Activated B cell treated with CpG ODN at 0.5 μM for 24 hours (primary cell): ENCODE measurements at regions of chr18 and their contacts with region 1.

Region 1: DNA sequence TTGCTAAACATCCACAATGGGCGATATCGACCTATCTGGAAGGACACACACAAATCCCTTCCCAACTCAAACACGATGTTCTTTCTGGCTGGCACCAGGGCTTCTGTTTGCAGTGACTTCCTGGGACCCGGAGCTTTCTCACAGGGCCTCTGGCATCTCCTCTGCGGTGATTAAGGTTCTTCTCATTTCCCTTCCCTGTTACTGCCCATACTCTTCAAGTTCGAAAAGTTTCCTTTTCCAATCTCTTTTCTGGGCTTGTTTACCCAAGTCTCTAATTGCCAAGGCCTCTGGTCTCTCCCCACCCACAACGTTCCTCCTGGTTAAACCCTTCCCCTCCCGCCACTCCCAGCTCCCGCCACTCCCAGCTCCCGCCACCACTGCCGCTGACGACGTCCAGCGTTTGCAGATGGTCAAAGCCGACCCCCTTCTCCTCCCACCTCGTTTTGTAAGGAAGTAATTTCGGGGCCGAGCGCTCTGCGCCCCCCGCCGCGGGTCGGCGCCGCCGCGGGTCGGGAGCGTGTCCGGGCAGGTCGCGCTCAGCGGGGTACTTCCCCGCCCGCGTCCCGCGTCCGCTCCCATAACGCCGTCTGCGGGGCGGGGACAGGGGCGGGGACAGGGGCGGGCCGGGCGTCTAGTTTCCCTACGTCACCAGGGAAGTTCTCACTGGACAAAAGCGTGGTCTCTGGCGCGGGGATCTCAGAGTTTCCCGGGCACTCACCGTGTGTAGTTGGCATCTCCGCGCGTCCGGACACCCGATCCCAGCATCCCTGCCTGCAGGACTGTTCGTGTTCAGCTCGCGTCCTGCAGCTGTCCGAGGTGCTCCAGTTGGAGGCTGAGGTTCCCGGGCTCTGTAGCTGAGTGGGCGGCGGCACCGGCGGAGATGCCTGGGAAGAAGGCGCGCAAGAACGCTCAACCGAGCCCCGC is at the start of gene PMAIP1:
- DNase-seq: peak; percentile 89
- ATAC-seq: peak; percentile 80
- H3K4me3 Mint-ChIP-seq: peak within 1 kb of the TSS; percentile 92
- H3K27ac Mint-ChIP-seq: peak within 1 kb of the TSS; percentile 99
- H3K4me1 Mint-ChIP-seq: peaks cover 40% of the 10 kb centered on the region
- H3K27me3 Mint-ChIP-seq: no peaks in the 10 kb centered on the region
- CTCF ChIP-seq: no peak
- total RNA-seq, gene PMAIP1: 68.5 and 69.9 TPM in 2 replicates

Region 2: DNA sequence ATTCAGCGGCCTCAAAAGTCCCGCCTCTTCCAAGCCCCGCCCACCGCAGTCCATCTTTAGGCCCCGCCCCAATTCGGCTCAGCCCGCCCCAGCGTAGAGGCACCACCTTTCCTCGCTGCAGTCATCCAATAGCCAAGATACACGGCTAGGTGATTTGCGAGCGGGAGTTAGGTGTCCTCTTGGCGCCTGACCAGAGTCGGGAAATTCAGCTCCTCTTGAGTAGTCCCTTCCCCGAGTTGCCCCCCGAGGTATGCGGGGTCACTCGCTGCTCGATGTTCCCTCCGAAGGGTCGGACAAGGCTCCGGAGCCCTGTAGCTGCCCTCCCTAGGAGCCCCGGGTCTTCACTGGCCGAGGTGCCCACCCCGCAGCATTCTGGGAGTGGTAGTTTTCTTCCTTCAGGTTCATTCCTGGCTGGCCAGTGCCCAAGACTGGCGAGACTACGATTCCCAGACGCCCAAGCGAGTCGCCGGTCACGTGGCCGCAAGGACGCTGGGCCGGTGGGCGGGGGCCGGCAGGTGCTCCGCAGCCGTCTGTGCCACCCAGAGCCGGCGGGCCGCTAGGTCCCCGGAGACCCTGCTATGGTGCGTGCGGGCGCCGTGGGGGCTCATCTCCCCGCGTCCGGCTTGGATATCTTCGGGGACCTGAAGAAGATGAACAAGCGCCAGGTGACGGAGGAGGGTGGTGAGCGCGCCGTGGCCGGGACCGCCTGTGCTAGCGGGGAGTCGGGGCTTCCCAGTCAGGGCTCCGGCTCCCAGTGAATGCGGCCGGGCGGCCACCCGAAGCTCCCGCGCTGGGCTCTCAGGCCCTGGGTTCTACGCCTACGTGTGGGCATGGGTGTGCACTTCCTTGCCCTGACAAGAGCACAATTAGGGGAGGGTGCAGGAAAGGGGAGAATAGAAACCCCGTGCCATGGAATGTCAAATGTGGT is 759.9 kb before region 1 on chr18 and contains the start of gene SEC11C:
- CTCF ChIA-PET with region 1: no interaction called
- POLR2A ChIA-PET with region 1: no interaction called
- intact Hi-C with region 1: loop called (anchors 1 kb)
- DNase-seq: peak; percentile 93
- ATAC-seq: peak; percentile 84
- H3K4me3 Mint-ChIP-seq: peak within 1 kb of the TSS; percentile 95
- H3K27ac Mint-ChIP-seq: peak within 1 kb of the TSS; percentile 100
- H3K4me1 Mint-ChIP-seq: peaks cover 44% of the 10 kb centered on the region
- H3K27me3 Mint-ChIP-seq: peaks cover 8% of the 10 kb centered on the region
- CTCF ChIP-seq: no peak
- total RNA-seq, gene SEC11C: 112 and 126 TPM in 2 replicates

Region 3: DNA sequence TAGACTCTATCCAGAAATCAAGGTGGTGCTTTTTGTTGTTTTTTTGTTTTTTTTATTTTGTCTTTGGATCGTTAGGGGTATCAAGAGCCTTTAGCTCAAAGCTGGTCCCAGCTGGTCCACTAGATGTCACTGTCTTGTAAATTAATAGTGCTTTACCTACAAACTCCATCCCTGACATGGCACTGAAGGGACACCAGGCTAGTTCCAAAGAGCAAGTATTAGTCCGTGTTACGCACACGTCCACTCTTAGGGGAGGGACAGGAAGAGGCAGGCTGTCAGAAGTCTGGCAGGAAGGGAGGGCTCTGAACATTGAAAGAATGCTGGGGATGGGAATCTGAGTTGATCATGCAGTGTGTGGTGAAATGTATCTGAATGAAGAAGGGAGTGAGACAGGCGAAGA is 116.4 kb before region 1 on chr18:
- CTCF ChIA-PET with region 1: no interaction called
- POLR2A ChIA-PET with region 1: no interaction called
- intact Hi-C with region 1: no loop called
- DNase-seq: no peak
- ATAC-seq: no peak
- H3K4me3 Mint-ChIP-seq: no peak overlapping the region
- H3K27ac Mint-ChIP-seq: no peak overlapping the region
- H3K4me1 Mint-ChIP-seq: no peaks in the 10 kb centered on the region
- H3K27me3 Mint-ChIP-seq: peaks cover 5% of the 10 kb centered on the region
- CTCF ChIP-seq: no peak

Region 4: DNA sequence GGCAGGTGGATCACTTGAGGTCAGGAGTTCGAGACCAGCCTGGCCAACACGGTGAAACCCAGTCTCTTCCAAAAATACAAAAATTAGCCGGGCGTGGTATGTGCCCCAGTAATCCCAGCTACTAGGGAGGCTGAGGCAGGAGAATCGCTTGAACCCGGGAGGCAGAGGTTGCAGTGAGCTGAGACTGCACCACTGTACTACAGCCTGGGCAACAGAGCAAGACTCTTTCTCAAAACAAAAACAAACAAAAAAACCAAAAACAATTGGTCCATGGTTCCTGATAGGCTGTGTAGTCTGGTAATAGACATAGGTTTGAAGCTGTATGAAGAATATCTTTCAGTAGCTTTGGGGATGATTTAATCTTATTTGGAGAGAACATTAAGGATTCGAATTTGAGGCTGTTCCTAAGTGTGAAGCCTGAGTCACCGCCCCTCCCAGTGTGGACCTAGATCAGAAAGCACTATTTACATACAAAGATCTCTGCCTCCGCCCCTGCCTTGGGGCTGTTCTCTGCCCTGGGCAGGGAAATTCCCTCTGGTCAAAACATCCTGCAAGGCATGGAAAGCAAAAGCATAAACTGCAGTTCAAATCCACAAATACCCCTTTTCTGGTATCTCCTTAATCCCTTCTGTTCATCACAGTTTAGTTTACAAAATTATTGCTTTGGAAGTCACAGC is 52.6 kb before region 1 on chr18:
- CTCF ChIA-PET with region 1: interaction called, 7 read pairs
- POLR2A ChIA-PET with region 1: interaction called, 61 read pairs
- intact Hi-C with region 1: loop called (anchors 1 kb)
- DNase-seq: no peak
- ATAC-seq: peak; percentile 89
- H3K4me3 Mint-ChIP-seq: peak overlapping the region; percentile 35
- H3K27ac Mint-ChIP-seq: peak overlapping the region; percentile 82
- H3K4me1 Mint-ChIP-seq: peaks cover 34% of the 10 kb centered on the region
- H3K27me3 Mint-ChIP-seq: no peaks in the 10 kb centered on the region
- CTCF ChIP-seq: no peak

Region 5: DNA sequence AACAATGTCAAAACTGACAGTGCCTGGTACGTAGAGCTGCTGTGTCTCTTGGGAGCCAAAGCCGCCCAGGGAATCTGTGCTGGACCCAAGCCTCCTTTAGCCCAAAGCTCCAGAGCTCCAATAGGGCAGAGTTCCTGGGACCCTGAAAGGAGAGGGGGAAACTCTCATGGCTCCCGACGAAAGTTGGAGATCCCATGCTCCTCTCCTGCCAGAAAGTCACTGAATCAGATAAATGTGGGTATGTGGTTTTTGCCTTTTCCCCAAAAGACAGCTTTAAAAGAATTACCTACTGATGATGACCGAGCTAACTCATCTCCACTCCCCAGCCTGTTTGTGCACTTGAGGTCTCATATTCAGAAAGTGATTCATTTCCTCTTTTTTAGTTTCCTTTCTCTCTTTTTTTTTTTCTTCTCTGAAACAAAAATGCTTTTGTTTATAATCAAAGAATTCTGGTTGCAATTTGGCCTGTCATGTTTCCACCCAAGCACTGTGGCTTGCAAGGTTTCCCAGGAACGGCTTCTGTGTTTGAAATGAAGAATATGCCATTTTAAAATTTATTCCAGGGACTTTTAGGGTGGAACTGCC is 13.9 kb before region 1 on chr18:
- CTCF ChIA-PET with region 1: interaction called, 4 read pairs
- POLR2A ChIA-PET with region 1: interaction called, 122 read pairs
- intact Hi-C with region 1: loop called (anchors 1 kb)
- DNase-seq: peak; percentile 38
- ATAC-seq: peak; percentile 79
- H3K4me3 Mint-ChIP-seq: peak overlapping the region; percentile 70
- H3K27ac Mint-ChIP-seq: peak overlapping the region; percentile 82
- H3K4me1 Mint-ChIP-seq: peaks cover 53% of the 10 kb centered on the region
- H3K27me3 Mint-ChIP-seq: no peaks in the 10 kb centered on the region
- CTCF ChIP-seq: no peak

Region 6: DNA sequence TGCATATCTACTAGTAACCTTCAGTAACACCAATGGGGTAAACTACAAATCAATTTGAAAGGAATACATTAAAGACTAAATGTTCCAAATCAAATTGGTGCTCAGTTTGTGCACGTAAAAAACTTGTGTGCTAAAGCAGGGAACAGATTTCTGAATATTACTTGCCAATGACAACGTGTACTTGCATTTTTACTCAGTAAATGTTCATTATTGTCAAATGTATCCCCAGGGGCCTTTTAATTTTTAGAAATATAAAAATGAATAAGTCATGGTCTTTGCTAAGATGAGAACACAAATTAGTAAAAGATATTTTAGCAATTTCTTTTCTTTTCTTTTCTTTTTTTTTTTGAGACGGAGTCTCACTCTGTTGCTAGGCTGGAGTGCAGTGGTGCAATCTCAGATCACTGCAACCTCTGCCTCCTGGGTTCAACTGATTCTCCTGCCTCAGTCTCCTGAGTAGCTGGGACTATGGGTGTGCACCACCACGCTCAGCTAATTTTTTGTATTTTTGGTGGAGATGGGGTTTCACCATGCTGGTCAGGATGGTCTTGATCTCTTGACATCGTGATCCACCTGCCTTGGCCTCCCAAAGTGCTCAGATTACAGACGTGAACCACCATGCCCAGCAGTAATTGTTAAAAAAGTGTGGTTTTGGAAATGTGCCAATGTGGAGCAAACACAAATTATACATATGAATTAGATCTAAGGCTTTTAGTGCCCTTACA is 52.9 kb after region 1 on chr18:
- CTCF ChIA-PET with region 1: interaction called, 6 read pairs
- POLR2A ChIA-PET with region 1: interaction called, 46 read pairs
- intact Hi-C with region 1: loop called (anchors 1 kb)
- DNase-seq: no peak
- ATAC-seq: no peak
- H3K4me3 Mint-ChIP-seq: no peak overlapping the region
- H3K27ac Mint-ChIP-seq: peak overlapping the region; percentile 50
- H3K4me1 Mint-ChIP-seq: peaks cover 26% of the 10 kb centered on the region
- H3K27me3 Mint-ChIP-seq: no peaks in the 10 kb centered on the region
- CTCF ChIP-seq: no peak

Region 7: DNA sequence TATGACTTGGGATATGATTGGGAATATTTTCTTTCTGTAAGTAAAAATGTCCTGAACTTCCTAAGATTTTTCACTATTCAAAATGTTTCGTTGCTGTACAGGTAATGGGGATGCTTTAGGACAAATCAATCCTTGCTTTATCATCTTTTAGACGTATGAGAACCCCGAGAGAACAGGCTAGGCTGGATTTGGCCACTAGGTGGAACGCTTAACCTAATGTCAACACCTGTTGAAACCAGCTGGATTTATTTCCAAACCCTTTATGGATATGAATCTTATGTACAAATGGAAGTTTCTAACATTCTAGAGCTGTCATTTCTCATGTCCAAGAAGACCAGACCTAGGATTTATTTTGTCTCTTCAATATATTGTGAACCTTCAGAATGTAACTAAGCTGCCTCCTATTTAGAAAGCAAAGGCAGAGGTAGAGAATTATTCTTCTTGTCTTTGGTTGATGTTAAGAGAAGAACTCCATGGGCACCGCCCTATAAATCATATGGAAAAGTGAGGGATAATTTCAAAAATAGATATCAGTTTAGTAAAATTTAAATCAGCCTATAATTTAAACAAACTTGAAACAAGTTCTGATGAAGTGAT is 96.9 kb after region 1 on chr18:
- CTCF ChIA-PET with region 1: interaction called, 3 read pairs
- POLR2A ChIA-PET with region 1: interaction called, 14 read pairs
- intact Hi-C with region 1: no loop called
- DNase-seq: no peak
- ATAC-seq: no peak
- H3K4me3 Mint-ChIP-seq: no peak overlapping the region
- H3K27ac Mint-ChIP-seq: no peak overlapping the region
- H3K4me1 Mint-ChIP-seq: no peaks in the 10 kb centered on the region
- H3K27me3 Mint-ChIP-seq: peaks cover 20% of the 10 kb centered on the region
- CTCF ChIP-seq: no peak